ENCODE measurements at regions of chr9 and their contacts with region 1.

Region 1: DNA sequence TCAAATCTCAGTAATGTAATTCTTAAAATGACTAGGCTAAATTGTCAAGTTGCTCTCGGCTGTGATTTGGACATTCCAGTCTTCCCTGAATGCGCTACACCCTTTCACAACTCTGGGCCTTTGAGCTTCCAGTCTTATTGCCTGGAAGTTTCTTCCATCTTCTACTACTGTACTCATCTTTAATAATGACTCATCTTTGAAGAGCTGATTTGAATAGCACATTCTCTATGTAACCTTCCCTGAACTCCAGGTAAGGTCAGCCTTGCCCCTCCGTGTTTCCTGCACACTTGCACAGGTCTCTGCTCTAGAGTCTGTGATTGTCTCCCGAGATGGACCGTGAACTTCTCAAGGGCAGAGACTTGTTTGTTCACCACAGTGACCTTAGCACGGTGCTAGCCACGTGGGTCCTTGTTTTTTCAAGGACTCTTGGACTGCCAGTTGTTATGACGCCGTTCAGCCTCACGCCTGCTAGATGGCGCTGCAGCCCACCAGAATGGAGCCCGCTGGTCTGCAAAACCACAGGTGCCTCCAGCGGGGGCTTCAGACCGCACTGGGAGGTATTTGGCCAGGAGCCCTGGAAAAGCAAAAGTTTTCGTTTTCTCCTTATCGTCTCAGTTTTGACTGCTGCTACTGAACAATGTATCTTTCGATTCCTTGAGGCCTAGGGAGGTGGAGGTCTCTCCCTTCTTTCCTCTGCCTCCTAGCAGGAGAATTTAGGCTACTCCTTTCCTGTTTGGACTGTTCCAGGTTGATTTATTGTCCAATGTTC is 44.4 kb downstream of the SEC61B start:
- DNase-seq: peak; percentile 54
- H3K27ac ChIP-seq: no peak overlapping the region
- CTCF ChIP-seq: peak; percentile 83

Region 2: DNA sequence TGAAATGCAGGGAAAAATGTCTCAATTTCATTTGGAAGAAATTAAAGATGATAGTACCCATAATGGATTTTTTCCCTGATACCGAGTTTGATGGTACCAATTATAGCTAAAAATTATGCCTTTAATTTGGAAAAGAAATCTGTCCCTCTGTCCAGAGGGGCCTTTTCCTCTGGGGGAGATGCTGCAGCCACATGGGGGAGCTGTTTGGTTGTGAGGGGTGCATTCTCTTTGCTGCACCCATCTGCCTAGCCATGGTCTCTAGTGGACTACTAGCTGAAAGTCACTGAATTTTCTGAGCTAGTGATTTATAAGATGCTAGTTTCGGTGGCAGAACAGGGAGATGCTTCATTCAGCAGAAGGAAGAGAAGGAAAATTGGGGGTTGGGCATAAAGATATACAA is 34.7 kb before region 1 on chr9:
- CTCF ChIA-PET with region 1: no interaction called
- POLR2A ChIA-PET with region 1: no interaction called
- DNase-seq: peak; percentile 32
- H3K27ac ChIP-seq: no peak overlapping the region
- CTCF ChIP-seq: peak; percentile 38

Region 3: DNA sequence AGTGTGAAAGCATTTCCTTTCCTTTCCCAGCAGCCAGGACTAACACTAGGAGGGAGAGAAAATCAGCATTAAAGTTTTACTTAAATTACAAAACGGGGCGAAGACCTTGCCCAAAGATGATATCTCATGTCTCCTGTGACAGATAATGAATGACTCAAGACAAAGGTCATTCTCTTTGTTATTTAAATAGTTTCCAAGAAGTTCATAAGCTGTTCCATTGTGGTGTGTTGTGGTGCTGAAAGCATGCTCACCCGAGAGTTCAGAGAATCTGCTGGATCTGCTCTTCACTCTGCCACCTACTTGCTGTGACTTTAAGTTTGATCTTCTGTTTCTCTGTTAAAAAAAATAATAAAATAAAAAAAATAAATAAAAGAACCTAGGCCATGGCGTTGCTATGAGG is 289.4 kb after region 1 on chr9:
- CTCF ChIA-PET with region 1: interaction called, 12 read pairs
- POLR2A ChIA-PET with region 1: no interaction called
- DNase-seq: no peak
- H3K27ac ChIP-seq: no peak overlapping the region
- CTCF ChIP-seq: no peak

Measured in RWPE1 (cell line).